Endothelial cell of umbilical vein (primary cell): ENCODE measurements at regions of chr7 and their contacts with region 1.

Region 1: GRCh38 chr7:100586266-100587025 is at the start of gene FBXO24:
- DNase-seq: peak; percentile 100
- H3K4me3 ChIP-seq: peak within 1 kb of the TSS; percentile 86 to 95 (median 93)
- H3K27ac ChIP-seq: peak within 1 kb of the TSS; percentile 65
- H3K4me1 ChIP-seq: peaks cover 32% of the 10 kb centered on the region
- H3K27me3 ChIP-seq: peaks cover 0 to 4% of the 10 kb centered on the region in 2 experiments
- CTCF ChIP-seq: no peak
- POLR2A ChIP-seq: peak; percentile 72
- total RNA-seq, gene FBXO24: 0.35 and 0.38 TPM in 2 replicates

Region 2: GRCh38 chr7:100469227-100470044 is 117.0 kb before region 1 on chr7:
- CTCF ChIA-PET with region 1: interaction called, 21 read pairs
- POLR2A ChIA-PET with region 1: interaction called, 7 read pairs
- dilution Hi-C with region 1: no loop called
- intact Hi-C with region 1: loop called (anchors 1 kb)
- DNase-seq: peak; percentile 66
- H3K4me3 ChIP-seq: no peak overlapping the region
- H3K27ac ChIP-seq: no peak overlapping the region
- H3K4me1 ChIP-seq: peaks cover 8% of the 10 kb centered on the region
- H3K27me3 ChIP-seq: no peaks in the 10 kb centered on the region
- CTCF ChIP-seq: peak; percentile 89 to 100
- POLR2A ChIP-seq: peak; percentile 52

Region 3: GRCh38 chr7:100538654-100539435 is 47.6 kb before region 1 on chr7 and contains the start of gene AGFG2:
- CTCF ChIA-PET with region 1: interaction called, 5 read pairs
- POLR2A ChIA-PET with region 1: no interaction called
- dilution Hi-C with region 1: no loop called
- intact Hi-C with region 1: loop called (anchors 2 kb)
- DNase-seq: peak; percentile 100
- H3K4me3 ChIP-seq: peak within 1 kb of the TSS; percentile 43 to 96 (median 45)
- H3K27ac ChIP-seq: peak within 1 kb of the TSS; percentile 0
- H3K4me1 ChIP-seq: peaks cover 13% of the 10 kb centered on the region
- H3K27me3 ChIP-seq: no peaks in the 10 kb centered on the region
- CTCF ChIP-seq: no peak
- POLR2A ChIP-seq: peak; percentile 67
- total RNA-seq, gene AGFG2: 36.3 and 44.6 TPM in 2 replicates

Region 4: GRCh38 chr7:100568896-100569844 is 17.3 kb before region 1 on chr7:
- CTCF ChIA-PET with region 1: interaction called, 34 read pairs
- POLR2A ChIA-PET with region 1: interaction called, 13 read pairs
- dilution Hi-C with region 1: no loop called
- intact Hi-C with region 1: loop called (anchors 1 kb)
- DNase-seq: peak; percentile 50
- H3K4me3 ChIP-seq: peak overlapping the region in 2 of 3 experiments; percentile 6 to 24
- H3K27ac ChIP-seq: no peak overlapping the region
- H3K4me1 ChIP-seq: peaks cover 11% of the 10 kb centered on the region
- H3K27me3 ChIP-seq: no peaks in the 10 kb centered on the region
- CTCF ChIP-seq: peak; percentile 5 to 44
- POLR2A ChIP-seq: no peak

Region 5: DNA sequence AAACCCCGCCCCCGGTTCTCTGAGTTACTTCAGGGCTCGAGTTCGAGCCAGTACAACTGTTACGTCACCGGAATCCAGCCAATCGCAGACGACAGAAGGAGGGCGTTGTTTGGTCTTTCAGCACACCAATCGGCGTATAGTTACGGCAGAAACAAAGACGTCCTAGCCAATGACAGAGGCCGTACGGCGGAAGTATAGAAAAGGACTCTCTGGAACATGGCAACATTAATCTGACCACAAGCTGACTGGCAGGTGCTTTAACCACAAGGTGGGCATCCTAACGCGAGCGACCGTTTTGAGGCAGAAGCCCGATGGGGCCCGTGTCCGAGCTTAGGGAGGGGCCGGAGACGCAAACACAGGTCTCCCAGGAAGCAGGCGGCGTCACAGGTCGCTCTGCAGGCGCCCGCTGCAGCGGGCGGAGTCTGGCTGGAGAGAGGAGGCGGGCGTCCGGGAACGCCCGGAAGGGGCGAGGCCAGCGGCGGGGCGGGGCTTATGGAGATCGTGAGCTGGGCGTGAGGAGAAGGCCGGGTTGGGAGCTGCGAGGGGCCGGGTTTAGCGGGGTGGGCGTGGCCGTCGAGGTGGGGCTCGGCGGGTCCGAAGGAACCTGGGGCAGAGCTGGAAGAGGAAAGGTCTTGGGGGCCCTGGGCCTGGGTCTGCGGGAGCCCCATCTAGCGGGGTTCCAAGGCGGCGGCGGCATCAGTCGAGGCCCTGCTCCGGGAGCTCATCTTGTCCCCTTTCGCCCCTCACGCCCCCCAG is 25.7 kb after region 1 on chr7 and contains the start of gene MOSPD3:
- CTCF ChIA-PET with region 1: interaction called, 10 read pairs
- POLR2A ChIA-PET with region 1: interaction called, 28 read pairs
- dilution Hi-C with region 1: no loop called
- intact Hi-C with region 1: loop called (anchors 1 kb)
- DNase-seq: peak; percentile 100
- H3K4me3 ChIP-seq: peak within 1 kb of the TSS; percentile 18 to 57 (median 56)
- H3K27ac ChIP-seq: peak within 1 kb of the TSS; percentile 46
- H3K4me1 ChIP-seq: peaks cover 10% of the 10 kb centered on the region
- H3K27me3 ChIP-seq: no peaks in the 10 kb centered on the region
- CTCF ChIP-seq: no peak
- POLR2A ChIP-seq: peak; percentile 69
- total RNA-seq, gene MOSPD3: 24.2 and 24.4 TPM in 2 replicates

Region 6: GRCh38 chr7:100649826-100650547 is 63.5 kb after region 1 on chr7:
- CTCF ChIA-PET with region 1: no interaction called
- POLR2A ChIA-PET with region 1: no interaction called
- dilution Hi-C with region 1: no loop called
- intact Hi-C with region 1: no loop called
- DNase-seq: no peak
- H3K4me3 ChIP-seq: no peak overlapping the region
- H3K27ac ChIP-seq: no peak overlapping the region
- H3K4me1 ChIP-seq: no peaks in the 10 kb centered on the region
- H3K27me3 ChIP-seq: peaks cover 0 to 3% of the 10 kb centered on the region in 2 experiments
- CTCF ChIP-seq: no peak
- POLR2A ChIP-seq: no peak

Region 7: DNA sequence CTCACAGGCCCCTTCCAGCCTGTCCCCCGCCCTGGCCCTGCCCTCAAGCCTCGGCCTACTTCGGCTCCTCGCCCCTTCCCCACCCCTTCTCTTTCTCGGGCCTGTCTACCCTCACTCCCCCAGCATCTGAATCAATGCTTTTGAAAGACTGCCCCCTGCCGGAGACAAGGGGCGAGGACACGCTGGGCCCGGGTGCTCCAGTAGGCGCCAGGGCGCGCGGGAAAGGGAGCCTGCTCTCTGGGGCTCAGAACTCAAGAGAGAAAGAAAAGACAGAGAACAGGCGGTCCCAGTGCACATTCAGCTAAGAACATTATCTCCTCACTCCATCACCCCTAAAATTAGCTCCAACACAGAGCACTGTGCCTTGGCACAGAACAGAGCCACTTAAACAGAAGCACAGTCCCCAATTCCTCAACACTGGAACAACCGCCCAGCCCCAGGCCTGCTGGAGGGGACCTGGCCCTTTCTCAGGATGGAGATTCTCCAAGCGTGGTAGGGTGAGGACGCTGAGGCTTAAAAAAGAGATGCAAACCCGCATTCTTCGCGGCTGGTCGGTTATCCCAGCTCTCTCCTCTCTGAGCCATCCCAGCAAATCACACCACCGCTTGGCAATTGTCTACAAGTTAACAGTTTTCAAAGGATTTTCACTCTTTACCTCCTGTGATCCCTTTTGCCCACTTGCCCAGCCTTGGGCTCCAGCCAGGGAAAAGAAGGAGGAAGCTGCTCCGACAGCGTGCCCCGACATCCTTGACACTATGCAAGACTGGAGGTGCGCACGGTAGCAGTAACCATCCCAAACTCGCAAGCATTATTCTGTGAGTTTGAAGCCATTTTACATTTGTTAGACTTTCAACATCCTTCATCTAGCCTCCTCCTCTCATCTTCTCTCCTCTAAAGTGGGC is 105.5 kb after region 1 on chr7:
- CTCF ChIA-PET with region 1: interaction called, 5 read pairs
- POLR2A ChIA-PET with region 1: interaction called, 4 read pairs
- dilution Hi-C with region 1: no loop called
- intact Hi-C with region 1: loop called (anchors 5 kb)
- DNase-seq: peak; percentile 65
- H3K4me3 ChIP-seq: peak overlapping the region in 1 of 3 experiments; percentile 65
- H3K27ac ChIP-seq: no peak overlapping the region
- H3K4me1 ChIP-seq: peaks cover 16% of the 10 kb centered on the region
- H3K27me3 ChIP-seq: no peaks in the 10 kb centered on the region
- CTCF ChIP-seq: peak; percentile 86 to 89
- POLR2A ChIP-seq: no peak

Region 8: GRCh38 chr7:100837099-100837836 is 250.8 kb after region 1 on chr7:
- CTCF ChIA-PET with region 1: no interaction called
- POLR2A ChIA-PET with region 1: no interaction called
- dilution Hi-C with region 1: no loop called
- intact Hi-C with region 1: no loop called
- DNase-seq: peak; percentile 92
- H3K4me3 ChIP-seq: peak overlapping the region in 1 of 3 experiments; percentile 10
- H3K27ac ChIP-seq: peak overlapping the region; percentile 82
- H3K4me1 ChIP-seq: peaks cover 16% of the 10 kb centered on the region
- H3K27me3 ChIP-seq: no peaks in the 10 kb centered on the region
- CTCF ChIP-seq: no peak
- POLR2A ChIP-seq: peak; percentile 77

Region 9: DNA sequence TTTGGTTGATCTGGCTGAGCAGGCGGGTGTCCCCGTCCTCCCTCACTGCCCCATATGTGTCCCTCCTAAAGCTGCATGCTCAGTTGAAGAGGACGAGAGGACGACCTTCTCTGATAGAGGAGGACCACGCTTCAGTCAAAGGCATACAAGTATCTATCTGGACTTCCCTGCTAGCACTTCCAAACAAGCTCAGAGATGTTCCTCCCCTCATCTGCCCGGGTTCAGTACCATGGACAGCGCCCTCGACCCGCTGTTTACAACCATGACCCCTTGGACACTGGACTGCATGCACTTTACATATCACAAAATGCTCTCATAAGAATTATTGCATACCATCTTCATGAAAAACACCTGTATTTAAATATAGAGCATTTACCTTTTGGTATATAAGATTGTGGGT is 471.9 kb after region 1 on chr7:
- CTCF ChIA-PET with region 1: no interaction called
- POLR2A ChIA-PET with region 1: no interaction called
- dilution Hi-C with region 1: no loop called
- intact Hi-C with region 1: no loop called
- DNase-seq: peak; percentile 53
- H3K4me3 ChIP-seq: no peak overlapping the region
- H3K27ac ChIP-seq: no peak overlapping the region
- H3K4me1 ChIP-seq: no peaks in the 10 kb centered on the region
- H3K27me3 ChIP-seq: peaks cover 3 to 5% of the 10 kb centered on the region in 2 experiments
- CTCF ChIP-seq: no peak
- POLR2A ChIP-seq: no peak